IMR-90 (cell line): ENCODE measurements at regions of chr14 and their contacts with region 1.

Region 1: DNA sequence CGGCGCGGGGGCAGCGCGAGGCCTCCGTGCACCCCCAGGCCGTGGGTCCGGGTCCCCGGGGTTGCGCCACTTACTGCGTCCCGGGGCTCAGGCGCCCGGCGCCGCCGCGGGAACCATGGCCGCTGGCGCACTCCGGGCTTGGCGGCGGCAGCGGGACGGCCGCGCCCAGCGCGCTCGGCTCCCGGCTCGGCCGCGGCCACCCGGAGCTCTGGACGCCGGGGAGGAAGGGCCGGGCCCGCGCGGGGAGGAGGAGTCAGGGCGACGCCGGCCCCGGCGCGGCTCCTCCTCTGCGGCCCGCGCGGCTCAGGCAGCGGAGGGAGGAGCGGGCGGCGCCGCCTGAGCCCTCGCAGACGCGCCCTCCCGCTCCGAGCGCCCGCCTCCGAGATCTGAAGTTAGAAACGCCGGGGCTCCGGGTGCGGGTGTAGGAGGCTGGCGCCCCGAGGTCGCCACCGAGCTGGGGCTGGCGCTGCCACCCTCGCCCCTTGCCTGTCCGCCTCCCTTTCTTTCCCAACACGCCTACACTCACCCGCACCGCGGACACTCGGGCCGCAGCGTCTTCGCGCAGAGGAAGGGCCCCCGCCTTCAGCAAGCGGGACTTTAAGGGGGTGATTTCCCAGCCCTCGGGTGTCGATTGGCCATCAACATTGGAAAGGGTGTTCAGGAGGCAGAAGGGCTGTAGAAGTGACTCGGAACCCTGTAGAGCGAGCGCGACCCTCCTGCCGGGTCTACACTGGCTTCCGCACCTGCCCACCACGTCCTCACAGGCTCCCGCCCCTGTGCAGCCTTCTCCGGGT is at the start of gene NIN:
- DNase-seq: peak; percentile 73
- ATAC-seq: peak; percentile 98
- H3K4me3 ChIP-seq: peak within 1 kb of the TSS; percentile 73
- H3K27ac ChIP-seq: peak within 1 kb of the TSS; percentile 73
- H3K4me1 ChIP-seq: peaks cover 16% of the 10 kb centered on the region
- H3K27me3 ChIP-seq: no peaks in the 10 kb centered on the region
- CTCF ChIP-seq: no peak
- POLR2A ChIP-seq: no peak
- RAD21 ChIP-seq: no peak
- total RNA-seq, gene NIN: 98.4 and 99.2 TPM in 2 replicates

Region 2: DNA sequence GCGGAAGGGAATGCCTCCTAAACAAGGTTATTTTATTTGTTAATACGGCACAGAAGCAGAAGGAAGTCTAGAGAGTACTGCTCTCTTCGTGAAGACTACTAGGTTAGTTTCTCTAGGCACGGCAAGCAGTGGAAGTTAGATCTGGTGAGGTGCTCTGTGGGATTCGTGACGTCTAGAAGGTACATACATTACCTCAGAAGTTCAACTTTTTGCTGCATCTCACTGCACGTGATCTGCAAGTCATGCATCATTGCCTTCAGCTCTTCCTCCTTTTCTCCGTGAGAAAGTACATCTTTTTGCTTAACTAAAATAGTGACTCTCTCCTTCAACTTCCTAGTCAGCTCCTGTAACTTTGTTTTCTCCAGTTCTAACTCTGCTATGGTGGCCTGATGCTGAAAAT is 74.8 kb before region 1 on chr14:
- CTCF ChIA-PET with region 1: no interaction called
- POLR2A ChIA-PET with region 1: no interaction called
- dilution Hi-C with region 1: no loop called
- in situ Hi-C with region 1: no loop called
- intact Hi-C with region 1: no loop called
- DNase-seq: no peak
- ATAC-seq: no peak
- H3K4me3 ChIP-seq: no peak overlapping the region
- H3K27ac ChIP-seq: no peak overlapping the region
- H3K4me1 ChIP-seq: no peaks in the 10 kb centered on the region
- H3K27me3 ChIP-seq: no peaks in the 10 kb centered on the region
- CTCF ChIP-seq: no peak
- POLR2A ChIP-seq: no peak
- RAD21 ChIP-seq: no peak

Region 3: DNA sequence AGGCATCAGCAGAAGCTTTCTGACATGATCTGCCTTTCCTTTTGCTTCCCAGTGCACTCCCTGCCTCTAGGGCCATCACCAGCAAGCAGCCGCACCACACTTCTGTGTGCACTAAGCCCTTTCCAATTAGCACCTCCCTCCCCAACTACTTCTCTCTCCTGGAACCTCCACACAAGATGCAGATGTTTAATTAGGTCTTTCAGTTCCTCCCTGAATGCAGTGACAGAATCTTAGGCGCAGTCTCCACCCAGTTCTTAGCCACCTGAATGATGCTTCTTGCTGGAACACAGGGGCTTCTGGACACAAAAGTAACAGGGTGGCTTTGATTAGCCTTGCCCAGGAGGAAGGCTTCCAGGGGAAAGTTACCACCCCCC is 33.1 kb before region 1 on chr14:
- CTCF ChIA-PET with region 1: no interaction called
- POLR2A ChIA-PET with region 1: no interaction called
- dilution Hi-C with region 1: no loop called
- in situ Hi-C with region 1: no loop called
- intact Hi-C with region 1: loop called (anchors 2 kb)
- DNase-seq: no peak
- ATAC-seq: no peak
- H3K4me3 ChIP-seq: no peak overlapping the region
- H3K27ac ChIP-seq: no peak overlapping the region
- H3K4me1 ChIP-seq: peaks cover 23% of the 10 kb centered on the region
- H3K27me3 ChIP-seq: no peaks in the 10 kb centered on the region
- CTCF ChIP-seq: no peak
- POLR2A ChIP-seq: no peak
- RAD21 ChIP-seq: no peak

Region 4: DNA sequence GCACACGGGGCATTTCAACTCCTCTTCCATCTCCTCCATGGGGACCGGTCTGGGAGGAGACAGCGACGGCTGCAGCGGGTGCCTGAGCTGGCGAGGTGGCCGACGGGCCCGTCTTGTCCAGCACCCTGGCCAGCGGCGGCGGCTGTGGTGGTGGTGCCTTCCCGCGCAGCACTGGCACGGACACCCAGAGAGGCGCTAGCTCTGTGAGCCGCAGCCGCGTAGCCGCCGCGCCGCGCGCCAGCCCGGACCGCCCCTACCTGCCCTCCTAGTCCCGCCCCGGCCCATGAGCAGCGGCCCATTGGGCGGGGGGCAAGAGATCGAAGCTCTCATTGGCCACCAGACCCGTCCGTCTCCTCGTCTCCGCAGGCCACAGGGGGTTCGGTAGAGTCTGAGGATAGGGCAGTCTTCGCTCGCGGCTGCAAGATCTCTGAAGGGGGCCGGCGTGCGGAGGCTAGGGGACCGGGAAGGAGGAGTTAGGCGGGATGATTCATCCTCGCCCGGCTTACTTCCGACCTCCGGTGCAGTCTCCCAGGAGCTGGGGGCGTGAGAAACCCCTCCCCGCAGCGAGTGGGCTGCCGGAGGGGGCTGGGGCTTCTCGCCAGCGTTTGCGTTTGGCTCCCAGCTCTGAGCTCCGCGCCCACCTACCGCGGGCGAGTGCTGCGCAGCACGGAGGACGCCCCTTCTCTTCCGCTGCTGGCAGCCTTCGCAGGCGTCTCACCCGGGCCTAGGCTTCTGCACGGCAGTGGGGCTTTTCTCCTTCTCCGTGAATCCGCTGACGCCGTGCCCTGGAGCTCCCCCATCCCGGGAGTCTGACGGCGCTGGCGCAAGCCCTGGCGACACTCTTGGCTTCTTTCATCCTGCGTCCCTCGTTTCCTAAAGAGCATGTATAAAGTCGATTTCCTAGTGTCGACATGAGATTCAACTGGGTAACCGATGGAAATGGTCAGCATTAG is 264.0 kb after region 1 on chr14 and contains the start of gene TRIM9:
- CTCF ChIA-PET with region 1: no interaction called
- POLR2A ChIA-PET with region 1: no interaction called
- dilution Hi-C with region 1: no loop called
- in situ Hi-C with region 1: no loop called
- intact Hi-C with region 1: no loop called
- DNase-seq: peak; percentile 93
- ATAC-seq: peak; percentile 99
- H3K4me3 ChIP-seq: peak within 1 kb of the TSS; percentile 47
- H3K27ac ChIP-seq: no peak within 1 kb of the TSS
- H3K4me1 ChIP-seq: no peaks in the 10 kb centered on the region
- H3K27me3 ChIP-seq: peaks cover 34% of the 10 kb centered on the region
- CTCF ChIP-seq: no peak
- POLR2A ChIP-seq: no peak
- RAD21 ChIP-seq: no peak
- total RNA-seq, gene TRIM9: under 0.01 TPM in 2 replicates